ENCODE measurements at regions of chr6 and their contacts with region 1.

Region 1: GRCh38 chr6:1575210-1576041 is 34.3 kb upstream of the FOXC1 start:
- DNase-seq: peak; percentile 52 to 90
- H3K4me3 ChIP-seq: peak overlapping the region; percentile 31 to 35
- H3K27ac ChIP-seq: peak overlapping the region; percentile 84 to 88
- H3K4me1 ChIP-seq: peaks cover 0 to 38% (median 29%) of the 10 kb centered on the region in 4 donors
- H3K27me3 ChIP-seq: no peaks in the 10 kb centered on the region
- CTCF ChIP-seq: no peak

Region 2: DNA sequence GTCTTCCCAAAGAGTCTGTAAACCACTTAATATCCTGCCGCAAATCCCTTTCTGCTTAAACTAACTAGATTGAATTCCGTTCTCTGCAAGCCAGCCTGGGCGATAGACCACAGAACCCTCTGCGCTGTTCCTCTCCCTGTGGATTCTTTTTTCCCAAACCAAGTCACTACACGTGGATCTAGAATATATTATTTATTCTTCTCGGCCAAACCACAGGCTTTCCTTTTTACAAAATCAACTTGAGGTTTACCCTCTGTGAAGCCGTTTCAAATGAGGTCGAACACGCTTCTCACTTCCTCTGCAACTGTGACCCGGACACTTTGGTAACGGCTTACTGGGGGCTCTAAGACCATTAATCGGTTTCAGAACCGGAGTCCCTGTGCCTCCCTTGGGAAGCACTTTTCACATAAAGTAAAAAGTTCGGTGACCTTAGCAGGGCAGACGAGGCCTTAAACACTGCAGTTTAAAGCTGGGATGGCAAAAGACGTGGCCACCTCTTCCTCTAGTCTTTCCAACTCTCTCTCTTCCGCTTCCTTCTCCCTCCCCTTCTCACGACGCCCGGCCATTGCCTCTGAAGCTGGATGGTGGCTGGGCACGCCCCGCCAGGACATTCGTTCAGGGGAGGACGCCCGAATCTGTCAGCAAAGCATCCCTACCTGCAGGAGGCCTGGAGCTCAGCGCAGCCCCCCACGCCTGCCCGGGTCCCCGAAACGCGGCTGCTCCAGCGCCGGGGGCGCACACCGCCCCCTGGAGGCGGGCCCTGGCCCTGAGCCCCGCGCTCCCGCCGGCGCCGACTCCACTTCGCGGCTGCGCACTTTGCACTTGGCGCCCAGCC is 20.7 kb before region 1 on chr6:
- intact Hi-C with region 1: loop called (anchors 1 kb)
- DNase-seq: peak; percentile 70 to 84
- H3K4me3 ChIP-seq: peak overlapping the region; percentile 63 to 83
- H3K27ac ChIP-seq: peak overlapping the region; percentile 80 to 81
- H3K4me1 ChIP-seq: peaks cover 0 to 14% (median 8%) of the 10 kb centered on the region in 4 donors
- H3K27me3 ChIP-seq: no peaks in the 10 kb centered on the region
- CTCF ChIP-seq: peak; percentile 83 to 88

Measured in tibial artery (tissue), 4 donors.